Posterior vena cava (tissue), 2 donors: ENCODE measurements at regions of chr12 and their contacts with region 1.

Region 1: DNA sequence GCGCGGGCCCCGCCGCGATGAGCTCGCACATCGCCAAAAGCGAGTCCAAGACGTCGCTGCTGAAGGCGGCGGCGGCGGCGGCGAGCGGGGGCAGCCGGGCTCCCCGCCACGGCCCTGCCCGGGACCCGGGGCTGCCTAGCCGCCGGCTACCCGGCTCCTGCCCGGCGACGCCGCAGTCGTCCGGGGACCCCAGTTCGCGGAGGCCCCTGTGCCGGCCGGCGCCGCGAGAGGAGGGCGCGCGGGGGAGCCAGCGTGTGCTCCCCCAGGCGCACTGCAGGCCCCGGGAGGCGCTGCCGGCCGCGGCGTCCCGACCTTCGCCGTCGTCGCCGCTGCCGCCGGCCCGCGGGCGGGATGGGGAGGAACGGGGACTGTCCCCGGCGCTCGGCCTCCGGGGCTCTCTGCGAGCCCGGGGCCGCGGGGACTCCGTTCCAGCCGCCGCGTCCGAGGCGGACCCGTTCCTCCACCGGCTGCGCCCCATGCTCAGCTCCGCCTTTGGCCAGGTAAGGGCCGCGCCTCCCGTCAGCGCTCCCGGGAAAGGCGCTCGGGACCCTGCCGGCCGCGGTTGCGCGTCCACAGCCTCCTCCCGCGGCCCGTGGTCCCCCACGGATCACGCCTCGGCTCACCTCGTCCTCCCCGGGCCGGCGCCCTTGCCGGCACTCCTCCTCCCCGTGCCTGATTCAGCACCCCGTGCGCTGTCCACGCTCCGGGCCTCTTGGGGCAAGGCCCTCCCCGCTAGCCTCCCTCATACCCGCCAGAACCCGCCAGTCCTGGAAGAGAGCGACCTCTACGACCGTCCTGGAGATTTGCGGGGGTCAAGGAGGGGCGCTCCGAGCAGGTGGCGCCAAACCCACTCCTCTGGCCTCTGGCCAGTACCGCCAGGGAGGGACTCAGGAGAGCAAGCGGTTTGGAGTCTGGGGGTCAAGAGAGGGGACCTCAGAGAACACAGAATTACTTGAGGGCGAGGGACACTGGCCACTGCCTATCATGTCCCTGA is 711 bp downstream of the CABP1 start:
- DNase-seq: peak; percentile 90

Region 2: GRCh38 chr12:119334430-119335170 is 1306.5 kb before region 1 on chr12 and contains the start of gene CCDC60:
- intact Hi-C with region 1: no loop called
- DNase-seq: no peak
- total RNA-seq, gene CCDC60: not detected

Region 3: GRCh38 chr12:120971299-120972179 is 330.4 kb after region 1 on chr12:
- intact Hi-C with region 1: loop called (anchors 10 kb)
- DNase-seq: no peak

Region 4: GRCh38 chr12:121048442-121048841 is 407.3 kb after region 1 on chr12:
- intact Hi-C with region 1: loop called in 1 of 2 experiments (anchors 5 kb)
- DNase-seq: no peak